Body of pancreas (tissue), 4 donors: ENCODE measurements at regions of chr6 and their contacts with region 1.

Region 1: DNA sequence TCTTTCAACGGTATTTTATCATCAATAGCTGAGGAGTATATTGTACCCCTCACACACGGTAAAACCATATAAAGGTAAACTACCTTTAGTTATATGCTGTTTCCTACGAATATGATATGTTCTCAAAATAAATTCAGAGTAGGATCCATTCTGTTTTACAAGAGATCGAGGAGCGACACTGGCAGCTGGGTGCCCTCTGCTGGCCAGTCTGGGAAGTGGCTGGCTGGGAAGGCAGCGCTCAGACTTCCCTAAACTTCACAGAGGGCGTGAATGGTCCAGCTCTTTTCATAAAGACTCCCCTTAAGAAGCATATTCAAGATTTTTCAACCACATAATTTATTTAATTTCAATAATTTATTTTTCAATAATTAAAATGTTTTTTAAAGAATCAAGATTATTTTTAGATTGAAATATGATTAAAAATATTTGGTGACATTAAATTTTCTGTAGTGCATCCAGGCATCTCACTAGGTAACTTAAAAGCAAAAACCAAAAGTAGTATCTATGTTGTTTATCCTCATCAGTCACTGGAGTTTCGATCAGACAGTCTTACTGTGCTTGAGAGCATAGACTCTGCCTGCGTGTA is 187.5 kb upstream of the PDE10A start:
- DNase-seq: peak; percentile 65 to 80 (median 74)
- ATAC-seq: peak; percentile 83
- H3K4me3 ChIP-seq: no peak overlapping the region
- H3K27ac ChIP-seq: no peak overlapping the region
- H3K4me1 ChIP-seq: peaks cover 12% of the 10 kb centered on the region
- H3K27me3 ChIP-seq: peaks cover 0 to 22% of the 10 kb centered on the region in 2 donors
- CTCF ChIP-seq: peak; percentile 84 to 99 (median 88)
- POLR2A ChIP-seq: no peak

Region 2: DNA sequence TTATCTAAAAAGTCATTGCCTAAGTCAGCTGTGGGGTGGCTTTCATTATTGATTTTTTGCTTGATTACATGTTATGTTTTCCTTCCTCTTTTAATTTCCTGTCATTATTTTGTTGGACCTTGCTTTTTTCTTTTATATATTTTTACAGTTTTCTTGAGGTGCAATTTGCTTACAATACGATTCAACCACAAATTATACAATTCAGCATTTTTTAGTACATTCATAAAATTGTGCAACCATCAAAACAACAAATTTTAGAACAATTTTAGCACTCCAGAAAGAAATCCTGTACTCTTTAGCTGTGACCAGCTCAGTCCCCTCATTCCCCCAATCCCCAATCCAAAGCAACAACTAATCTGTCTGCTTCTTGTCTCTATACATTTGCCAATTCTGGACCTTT is 1150.0 kb before region 1 on chr6:
- intact Hi-C with region 1: no loop called
- DNase-seq: no peak
- ATAC-seq: no peak
- H3K4me3 ChIP-seq: no peak overlapping the region
- H3K27ac ChIP-seq: no peak overlapping the region
- H3K4me1 ChIP-seq: no peaks in the 10 kb centered on the region
- H3K27me3 ChIP-seq: no peaks in the 10 kb centered on the region
- CTCF ChIP-seq: no peak
- POLR2A ChIP-seq: no peak

Region 3: GRCh38 chr6:165439928-165440554 is 410.5 kb before region 1 on chr6:
- intact Hi-C with region 1: loop called (anchors 5 kb)
- DNase-seq: no peak
- ATAC-seq: no peak
- H3K4me3 ChIP-seq: no peak overlapping the region
- H3K27ac ChIP-seq: no peak overlapping the region
- H3K4me1 ChIP-seq: no peaks in the 10 kb centered on the region
- H3K27me3 ChIP-seq: no peaks in the 10 kb centered on the region
- CTCF ChIP-seq: peak; percentile 30 to 67 (median 56)
- POLR2A ChIP-seq: no peak

Region 4: DNA sequence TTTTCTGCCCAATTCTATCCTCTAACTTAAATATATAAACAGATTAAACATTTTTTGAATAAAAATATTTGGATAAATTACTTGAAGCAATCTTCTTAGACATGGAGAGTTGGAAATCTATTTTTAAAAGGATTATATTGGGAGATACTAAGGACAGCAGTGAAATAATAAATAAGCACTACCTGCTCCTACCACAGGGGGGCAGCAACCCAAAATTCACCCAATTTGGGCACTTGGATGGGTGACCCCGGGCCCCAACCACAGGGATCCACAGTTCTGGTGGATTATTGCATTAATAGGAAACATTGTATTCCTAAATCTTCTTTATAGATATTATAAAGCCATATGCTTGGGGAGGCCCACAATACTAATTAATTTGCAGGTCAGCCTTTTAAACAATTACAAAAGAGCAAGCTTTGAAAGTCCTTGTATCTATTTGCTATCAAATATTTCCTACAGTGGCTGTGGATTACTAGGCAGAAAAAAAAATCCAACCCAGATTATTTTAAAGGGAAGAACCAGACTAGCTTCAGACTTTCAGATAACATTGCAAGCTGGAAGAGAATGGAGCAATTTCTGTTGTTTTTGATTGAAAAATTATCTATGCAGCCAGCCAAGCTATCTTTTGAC is 121.1 kb before region 1 on chr6:
- intact Hi-C with region 1: loop called (anchors 10 kb)
- DNase-seq: peak; percentile 32 to 58 (median 46)
- ATAC-seq: peak; percentile 60
- H3K4me3 ChIP-seq: no peak overlapping the region
- H3K27ac ChIP-seq: no peak overlapping the region
- H3K4me1 ChIP-seq: no peaks in the 10 kb centered on the region
- H3K27me3 ChIP-seq: no peaks in the 10 kb centered on the region
- CTCF ChIP-seq: peak; percentile 61 to 97 (median 70)
- POLR2A ChIP-seq: no peak

Region 5: GRCh38 chr6:166075186-166075585 is 224.7 kb after region 1 on chr6:
- intact Hi-C with region 1: no loop called
- DNase-seq: no peak
- ATAC-seq: no peak
- H3K4me3 ChIP-seq: no peak overlapping the region
- H3K27ac ChIP-seq: no peak overlapping the region
- H3K4me1 ChIP-seq: no peaks in the 10 kb centered on the region
- H3K27me3 ChIP-seq: no peaks in the 10 kb centered on the region
- CTCF ChIP-seq: no peak
- POLR2A ChIP-seq: no peak